Activated CD8-positive, alpha-beta T cell treated with anti-CD3 and anti-CD28 coated beads for 36 hours (primary cell): ENCODE measurements at regions of chr17 and their contacts with region 1.

Region 1: GRCh38 chr17:42067351-42068091 is 17.1 kb upstream of the C17orf113 start:
- DNase-seq: peak; percentile 84
- ATAC-seq: peak; percentile 43
- H3K4me3 Mint-ChIP-seq: no peak overlapping the region
- H3K27ac Mint-ChIP-seq: no peak overlapping the region
- H3K4me1 Mint-ChIP-seq: peaks cover 30% of the 10 kb centered on the region
- H3K27me3 Mint-ChIP-seq: peaks cover 2% of the 10 kb centered on the region
- CTCF ChIP-seq: peak; percentile 90

Region 2: DNA sequence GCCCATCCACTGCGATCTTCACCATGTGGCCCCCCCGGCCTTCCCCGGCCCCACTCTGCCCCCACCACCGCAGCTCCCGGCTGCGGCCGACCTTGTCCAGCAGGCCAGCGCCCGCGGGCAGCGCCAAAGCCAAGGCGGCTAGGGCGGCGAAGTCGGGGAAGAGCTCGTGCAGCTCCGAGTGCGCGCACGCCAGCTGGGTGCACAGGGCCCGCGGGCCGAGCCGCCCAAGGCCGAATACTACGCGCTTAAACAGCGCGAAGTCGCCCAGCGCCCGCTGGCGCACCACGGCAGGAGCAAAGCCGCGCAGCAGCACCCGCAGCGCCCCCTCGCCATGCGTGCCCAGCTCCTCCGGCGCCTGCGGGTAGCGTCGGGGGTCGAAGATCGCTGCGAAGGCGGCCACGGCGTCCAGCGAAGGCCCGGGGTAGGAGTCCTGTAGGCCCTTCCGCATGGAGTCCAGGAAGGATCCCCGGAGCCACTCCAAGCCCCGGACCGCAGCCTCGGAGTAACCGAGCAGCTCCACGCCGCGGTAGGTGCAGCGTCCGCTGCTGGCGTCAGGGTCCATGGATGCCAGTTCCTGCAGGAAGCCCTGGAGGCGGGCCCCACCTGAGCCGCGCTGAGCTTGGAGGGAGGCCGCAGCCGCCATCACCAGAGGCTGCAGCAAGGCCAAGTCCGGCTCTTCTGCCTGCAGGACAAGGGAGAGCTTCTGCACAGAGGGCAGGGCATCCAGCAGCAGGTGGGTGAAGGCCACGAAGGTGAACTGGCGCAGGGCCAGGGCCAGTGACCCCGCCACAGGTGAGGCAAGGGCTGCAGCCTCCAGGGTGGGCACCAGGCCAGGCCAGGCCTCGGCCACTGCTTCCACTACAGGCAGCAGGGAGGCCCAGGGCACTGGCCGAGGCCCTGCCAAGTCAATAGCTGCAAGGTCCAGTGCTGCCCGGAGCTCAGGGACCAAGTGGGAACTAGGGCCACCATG is 27.4 kb before region 1 on chr17:
- CTCF ChIA-PET with region 1: interaction called, 10 read pairs
- POLR2A ChIA-PET with region 1: no interaction called
- intact Hi-C with region 1: no loop called
- DNase-seq: no peak
- ATAC-seq: no peak
- H3K4me3 Mint-ChIP-seq: no peak overlapping the region
- H3K27ac Mint-ChIP-seq: no peak overlapping the region
- H3K4me1 Mint-ChIP-seq: no peaks in the 10 kb centered on the region
- H3K27me3 Mint-ChIP-seq: peaks cover 3% of the 10 kb centered on the region
- CTCF ChIP-seq: no peak

Region 3: GRCh38 chr17:42077755-42078154 is 10.2 kb after region 1 on chr17:
- CTCF ChIA-PET with region 1: interaction called, 24 read pairs
- POLR2A ChIA-PET with region 1: no interaction called
- intact Hi-C with region 1: no loop called
- DNase-seq: no peak
- ATAC-seq: no peak
- H3K4me3 Mint-ChIP-seq: no peak overlapping the region
- H3K27ac Mint-ChIP-seq: no peak overlapping the region
- H3K4me1 Mint-ChIP-seq: peaks cover 2% of the 10 kb centered on the region
- H3K27me3 Mint-ChIP-seq: peaks cover 6% of the 10 kb centered on the region
- CTCF ChIP-seq: no peak

Region 4: GRCh38 chr17:42101513-42102319 is 34.2 kb after region 1 on chr17:
- CTCF ChIA-PET with region 1: interaction called, 72 read pairs
- POLR2A ChIA-PET with region 1: interaction called, 4 read pairs
- intact Hi-C with region 1: no loop called
- DNase-seq: peak; percentile 90
- ATAC-seq: peak; percentile 89
- H3K4me3 Mint-ChIP-seq: no peak overlapping the region
- H3K27ac Mint-ChIP-seq: no peak overlapping the region
- H3K4me1 Mint-ChIP-seq: peaks cover 9% of the 10 kb centered on the region
- H3K27me3 Mint-ChIP-seq: peaks cover 8% of the 10 kb centered on the region
- CTCF ChIP-seq: peak; percentile 96

Region 5: GRCh38 chr17:42120770-42121769 is 53.5 kb after region 1 on chr17 and contains the start of gene KAT2A:
- CTCF ChIA-PET with region 1: interaction called, 37 read pairs
- POLR2A ChIA-PET with region 1: interaction called, 4 read pairs
- intact Hi-C with region 1: loop called (anchors 2 kb)
- DNase-seq: peak; percentile 84
- ATAC-seq: peak; percentile 87
- H3K4me3 Mint-ChIP-seq: peak within 1 kb of the TSS; percentile 67
- H3K27ac Mint-ChIP-seq: peak within 1 kb of the TSS; percentile 85
- H3K4me1 Mint-ChIP-seq: peaks cover 30% of the 10 kb centered on the region
- H3K27me3 Mint-ChIP-seq: no peaks in the 10 kb centered on the region
- CTCF ChIP-seq: no peak
- total RNA-seq, gene KAT2A: 49.2 to 50.2 TPM